ENCODE measurements at regions of chr10 and their contacts with region 1.

Region 1: DNA sequence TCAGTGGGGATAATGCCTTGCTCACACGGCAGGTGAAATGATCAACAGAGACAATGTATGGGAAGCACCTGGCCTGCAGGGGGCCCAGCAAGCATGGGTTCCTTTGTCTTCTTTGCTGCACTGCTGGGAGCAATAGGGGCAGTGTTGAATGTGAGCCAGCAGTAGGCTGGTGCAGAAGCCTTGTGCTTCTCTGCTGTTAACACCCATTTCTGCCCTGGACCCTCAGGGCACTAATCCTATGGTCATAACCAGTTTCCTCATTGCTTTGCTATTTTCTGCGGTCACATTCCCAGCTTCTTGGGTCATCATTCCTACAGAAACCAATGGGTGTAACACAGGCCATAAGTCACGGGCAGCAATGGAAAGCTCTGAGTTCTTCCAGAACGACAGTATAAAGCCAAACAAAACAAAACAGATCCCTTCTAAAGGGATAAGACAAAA is 10.9 kb upstream of the LGI1 start:
- DNase-seq: no peak
- ATAC-seq: no peak
- H3K4me3 ChIP-seq: no peak overlapping the region
- H3K27ac ChIP-seq: no peak overlapping the region
- H3K4me1 ChIP-seq: no peaks in the 10 kb centered on the region
- H3K27me3 ChIP-seq: no peaks in the 10 kb centered on the region
- CTCF ChIP-seq: no peak

Region 2: GRCh38 chr10:93816123-93816747 is 69.4 kb after region 1 on chr10:
- intact Hi-C with region 1: loop called (anchors 1 to 5 kb)
- DNase-seq: peak; percentile 43 to 66
- ATAC-seq: peak; percentile 65 to 90 (median 72)
- H3K4me3 ChIP-seq: no peak overlapping the region
- H3K27ac ChIP-seq: no peak overlapping the region
- H3K4me1 ChIP-seq: no peaks in the 10 kb centered on the region
- H3K27me3 ChIP-seq: peaks cover 0 to 2% (median 0%) of the 10 kb centered on the region in 3 donors
- CTCF ChIP-seq: peak; percentile 65

Region 3: GRCh38 chr10:93947055-93947454 is 200.2 kb after region 1 on chr10:
- intact Hi-C with region 1: no loop called
- DNase-seq: peak; percentile 51 to 81
- ATAC-seq: peak; percentile 98 to 99 (median 99)
- H3K4me3 ChIP-seq: peak overlapping the region; percentile 2
- H3K27ac ChIP-seq: peak overlapping the region; percentile 89
- H3K4me1 ChIP-seq: peaks cover 39% of the 10 kb centered on the region
- H3K27me3 ChIP-seq: no peaks in the 10 kb centered on the region
- CTCF ChIP-seq: no peak

Measured in psoas muscle (tissue), 8 donors.